CD4-positive, alpha-beta memory T cell (primary cell): ENCODE measurements at regions of chr2 and their contacts with region 1.

Region 1: GRCh38 chr2:12514631-12515433 is 201.9 kb upstream of the TRIB2 start:
- DNase-seq: peak; percentile 58 to 68 (median 60)
- H3K4me3 ChIP-seq: peak overlapping the region in 1 of 2 donors; percentile 34
- H3K4me3 Mint-ChIP-seq: peak overlapping the region; percentile 2 to 75 (median 69)
- H3K27ac ChIP-seq: peak overlapping the region; percentile 37
- H3K27ac Mint-ChIP-seq: peak overlapping the region; percentile 60 to 90 (median 81)
- H3K4me1 ChIP-seq: peaks cover 65% of the 10 kb centered on the region
- H3K4me1 Mint-ChIP-seq: peaks cover 58 to 79% (median 68%) of the 10 kb centered on the region in 4 donors
- H3K27me3 ChIP-seq: no peaks in the 10 kb centered on the region
- H3K27me3 Mint-ChIP-seq: no peaks in the 10 kb centered on the region

Region 2: GRCh38 chr2:12486205-12487118 is 28.4 kb before region 1 on chr2:
- CTCF ChIA-PET with region 1: interaction called, 3 read pairs
- POLR2A ChIA-PET with region 1: interaction called, 10 read pairs
- intact Hi-C with region 1: loop called (anchors 2 kb)
- DNase-seq: no peak
- H3K4me3 ChIP-seq: no peak overlapping the region
- H3K4me3 Mint-ChIP-seq: peak overlapping the region in 7 of 8 donors; percentile 13 to 89 (median 81)
- H3K27ac ChIP-seq: no peak overlapping the region
- H3K27ac Mint-ChIP-seq: peak overlapping the region; percentile 79 to 95 (median 92)
- H3K4me1 ChIP-seq: peaks cover 77% of the 10 kb centered on the region
- H3K4me1 Mint-ChIP-seq: peaks cover 57 to 69% (median 67%) of the 10 kb centered on the region in 4 donors
- H3K27me3 ChIP-seq: no peaks in the 10 kb centered on the region
- H3K27me3 Mint-ChIP-seq: no peaks in the 10 kb centered on the region